ENCODE measurements at regions of chr2 and their contacts with region 1.

Region 1: DNA sequence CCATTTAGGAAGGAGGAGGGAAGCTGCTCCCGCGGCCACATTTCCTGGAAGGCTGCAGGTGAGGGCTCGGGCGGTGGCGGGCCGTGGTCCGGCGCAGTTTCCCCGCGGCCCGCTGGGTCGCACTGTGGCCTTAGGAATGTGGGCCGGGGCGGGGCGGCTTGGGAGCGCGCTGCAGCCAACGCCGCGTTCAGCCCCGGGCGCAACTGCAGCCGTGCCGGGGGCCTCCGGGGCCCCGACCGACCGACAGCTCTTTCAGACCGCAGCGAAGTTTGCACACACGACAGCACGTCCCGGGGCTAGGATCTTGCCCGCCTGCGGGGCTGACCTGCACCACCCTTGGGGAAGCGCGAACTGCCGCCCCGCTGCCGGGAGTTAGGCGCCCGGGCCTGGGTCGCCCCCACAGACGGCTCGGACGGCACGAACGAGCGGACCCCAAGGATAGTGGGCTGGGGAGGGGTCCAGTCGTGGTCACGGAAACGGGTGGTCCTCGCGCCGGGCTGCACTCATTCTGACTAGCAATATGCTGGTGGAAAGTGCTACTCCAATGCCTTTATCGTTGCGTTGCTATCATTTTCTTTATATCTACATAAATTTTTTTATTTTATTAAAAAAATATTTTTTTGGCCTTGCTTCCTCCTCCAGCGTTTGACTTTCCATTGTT is 69.9 kb upstream of the DLX2 start:
- ATAC-seq: peak; percentile 99 to 100 (median 100)
- H3K4me3 ChIP-seq: peak overlapping the region; percentile 41 to 61 (median 46)
- H3K27ac ChIP-seq: no peak overlapping the region
- H3K4me1 ChIP-seq: peaks cover 0 to 3% of the 10 kb centered on the region in 2 donors

Region 2: GRCh38 chr2:172456002-172456401 is 283.4 kb after region 1 on chr2:
- in situ Hi-C with region 1: loop called (anchors 5 to 25 kb)
- ATAC-seq: peak in 2 of 8 experiments; percentile 41 to 59
- H3K4me3 ChIP-seq: no peak overlapping the region
- H3K27ac ChIP-seq: no peak overlapping the region
- H3K4me1 ChIP-seq: no peaks in the 10 kb centered on the region

Region 3: DNA sequence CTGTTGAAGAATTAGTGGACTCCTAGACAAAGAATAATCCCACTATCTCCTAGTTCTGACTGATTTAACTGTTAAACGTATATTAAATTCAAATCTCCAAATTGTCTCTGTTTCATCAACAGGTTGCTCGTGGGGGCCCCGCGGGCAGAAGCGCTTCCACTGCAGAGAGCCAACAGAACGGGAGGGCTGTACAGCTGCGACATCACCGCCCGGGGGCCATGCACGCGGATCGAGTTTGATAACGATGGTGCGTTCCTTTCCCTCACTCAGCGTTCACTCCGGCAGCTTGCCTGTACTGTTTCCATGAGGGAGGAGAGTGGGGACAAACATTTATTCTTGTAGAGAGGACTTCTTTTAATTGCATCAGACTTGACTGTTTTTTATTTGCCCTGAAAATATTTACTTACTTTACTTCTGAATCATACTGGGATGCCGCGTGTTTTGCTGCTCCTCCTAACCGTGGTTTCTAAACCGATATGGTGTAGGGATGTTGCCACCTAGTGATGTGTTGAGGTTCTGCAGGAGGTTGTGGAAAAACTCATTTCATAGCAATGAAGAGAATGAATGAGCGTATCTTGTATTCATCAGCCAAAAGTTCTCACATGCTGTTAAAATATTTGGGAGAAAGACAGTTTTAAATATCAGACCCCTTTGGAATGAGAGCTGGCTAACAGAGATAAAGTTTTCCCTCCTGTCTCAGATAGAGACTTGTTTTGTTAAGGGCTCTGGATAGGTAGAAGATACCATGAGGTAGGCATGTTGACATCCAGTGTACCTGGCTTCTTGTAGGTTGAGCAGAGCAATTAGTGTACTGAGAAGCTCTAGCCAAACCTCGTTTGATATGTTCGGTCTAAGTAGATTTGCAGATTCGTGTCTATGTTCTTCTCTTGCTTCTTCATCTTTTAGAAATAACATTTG is 293.0 kb after region 1 on chr2:
- in situ Hi-C with region 1: loop called in 8 of 9 experiments (anchors 5 to 25 kb)
- ATAC-seq: peak; percentile 61 to 85 (median 80)
- H3K4me3 ChIP-seq: no peak overlapping the region
- H3K27ac ChIP-seq: no peak overlapping the region
- H3K4me1 ChIP-seq: peaks cover 9% of the 10 kb centered on the region in 2 donors

Region 4: GRCh38 chr2:172698041-172698863 is 525.6 kb after region 1 on chr2:
- in situ Hi-C with region 1: loop called in 1 of 9 experiments (anchors 25 kb)
- ATAC-seq: peak; percentile 18 to 79 (median 62)
- H3K4me3 ChIP-seq: no peak overlapping the region
- H3K27ac ChIP-seq: no peak overlapping the region
- H3K4me1 ChIP-seq: no peaks in the 10 kb centered on the region